ENCODE measurements at regions of chr12 and their contacts with region 1.

Region 1: DNA sequence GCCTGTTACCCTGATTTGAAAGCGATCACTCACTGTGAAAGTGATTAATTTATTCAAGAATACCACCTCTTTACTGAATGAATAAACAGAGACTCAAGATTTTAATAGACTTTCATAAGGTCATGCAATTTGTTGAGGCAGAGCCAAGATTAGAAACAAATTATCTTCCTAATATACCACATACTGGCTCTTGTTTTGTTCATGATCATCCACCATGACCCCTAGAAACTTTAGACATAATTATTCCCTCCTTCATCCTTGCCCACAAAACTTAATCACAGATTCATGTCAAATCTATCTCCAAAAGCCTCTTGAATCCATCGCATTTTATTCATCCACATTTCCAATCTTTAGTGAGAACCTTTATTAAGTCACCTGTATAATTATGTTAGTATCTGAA is 152.3 kb downstream of the ATXN7L3B start:
- DNase-seq: no peak
- ATAC-seq: no peak
- H3K4me3 ChIP-seq: no peak overlapping the region
- H3K27ac ChIP-seq: 0 out of 2 replicates have a peak overlapping the region, but pooled peaks have one; percentile 54
- H3K4me1 ChIP-seq: no peaks in the 10 kb centered on the region; the same call in 1 of the 2 replicates
- H3K27me3 ChIP-seq: no peaks in the 10 kb centered on the region
- CTCF ChIP-seq: no peak

Region 2: GRCh38 chr12:74250891-74251290 is 439.0 kb before region 1 on chr12:
- CTCF ChIA-PET with region 1: no interaction called
- POLR2A ChIA-PET with region 1: no interaction called
- in situ Hi-C with region 1: no loop called
- intact Hi-C with region 1: no loop called
- DNase-seq: no peak
- ATAC-seq: no peak
- H3K4me3 ChIP-seq: no peak overlapping the region
- H3K27ac ChIP-seq: no peak overlapping the region
- H3K4me1 ChIP-seq: no peaks in the 10 kb centered on the region
- H3K27me3 ChIP-seq: no peaks in the 10 kb centered on the region
- CTCF ChIP-seq: no peak

Region 3: DNA sequence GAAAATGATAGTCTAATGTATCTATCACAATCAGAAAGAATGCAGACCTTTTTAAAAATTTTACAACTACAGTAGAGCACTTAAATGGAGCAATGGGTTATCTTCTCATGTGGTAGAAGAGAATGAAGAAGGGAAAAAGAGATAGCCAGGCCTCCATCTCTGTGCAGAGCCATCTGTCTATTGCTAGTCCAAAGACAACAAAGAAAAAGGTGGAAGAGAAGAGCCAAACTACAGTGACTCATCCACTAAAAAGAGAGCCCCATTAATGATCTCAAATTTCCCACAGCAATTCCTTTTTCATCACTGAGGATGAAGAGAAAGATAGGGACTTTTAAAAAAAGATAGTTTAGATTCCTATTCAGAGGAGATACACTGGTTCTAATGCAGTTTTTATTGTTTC is 80.6 kb after region 1 on chr12:
- CTCF ChIA-PET with region 1: no interaction called
- POLR2A ChIA-PET with region 1: no interaction called
- in situ Hi-C with region 1: no loop called
- intact Hi-C with region 1: no loop called
- DNase-seq: no peak
- ATAC-seq: no peak
- H3K4me3 ChIP-seq: no peak overlapping the region
- H3K27ac ChIP-seq: no peak overlapping the region
- H3K4me1 ChIP-seq: no peaks in the 10 kb centered on the region
- H3K27me3 ChIP-seq: no peaks in the 10 kb centered on the region
- CTCF ChIP-seq: no peak

Region 4: GRCh38 chr12:74836567-74836966 is 146.6 kb after region 1 on chr12:
- CTCF ChIA-PET with region 1: no interaction called
- POLR2A ChIA-PET with region 1: no interaction called
- in situ Hi-C with region 1: no loop called
- intact Hi-C with region 1: no loop called
- DNase-seq: no peak
- ATAC-seq: no peak
- H3K4me3 ChIP-seq: no peak overlapping the region
- H3K27ac ChIP-seq: no peak overlapping the region
- H3K4me1 ChIP-seq: no peaks in the 10 kb centered on the region
- H3K27me3 ChIP-seq: no peaks in the 10 kb centered on the region
- CTCF ChIP-seq: no peak

Region 5: DNA sequence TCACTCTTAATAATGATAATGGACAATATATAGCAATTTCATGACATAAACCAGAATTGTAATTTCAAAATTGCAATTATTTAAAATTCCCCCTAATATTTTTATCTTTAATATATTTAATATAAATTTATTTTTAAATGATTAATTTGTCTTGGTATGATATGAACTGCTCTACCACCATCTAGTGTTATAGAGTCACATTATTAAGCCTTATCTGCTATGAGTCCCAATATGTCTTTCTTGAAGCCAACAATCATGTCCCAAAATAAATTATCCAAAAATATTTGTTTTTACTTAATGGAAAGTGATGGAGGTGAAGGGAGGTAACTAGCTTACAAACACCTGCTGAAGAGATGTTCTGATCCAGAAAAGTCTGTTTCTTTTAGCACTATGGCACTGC is 368.3 kb after region 1 on chr12:
- CTCF ChIA-PET with region 1: no interaction called
- POLR2A ChIA-PET with region 1: no interaction called
- in situ Hi-C with region 1: no loop called
- intact Hi-C with region 1: loop called (anchors 10 kb)
- DNase-seq: no peak
- ATAC-seq: no peak
- H3K4me3 ChIP-seq: no peak overlapping the region
- H3K27ac ChIP-seq: no peak overlapping the region
- H3K4me1 ChIP-seq: no peaks in the 10 kb centered on the region
- H3K27me3 ChIP-seq: no peaks in the 10 kb centered on the region
- CTCF ChIP-seq: peak; percentile 12; the same call in 1 of the 2 replicates

Measured in Panc1 (cell line).